Activated B cell treated with CpG ODN at 0.5 μM for 24 hours (primary cell): ENCODE measurements at regions of chr1 and their contacts with region 1.

Region 1: DNA sequence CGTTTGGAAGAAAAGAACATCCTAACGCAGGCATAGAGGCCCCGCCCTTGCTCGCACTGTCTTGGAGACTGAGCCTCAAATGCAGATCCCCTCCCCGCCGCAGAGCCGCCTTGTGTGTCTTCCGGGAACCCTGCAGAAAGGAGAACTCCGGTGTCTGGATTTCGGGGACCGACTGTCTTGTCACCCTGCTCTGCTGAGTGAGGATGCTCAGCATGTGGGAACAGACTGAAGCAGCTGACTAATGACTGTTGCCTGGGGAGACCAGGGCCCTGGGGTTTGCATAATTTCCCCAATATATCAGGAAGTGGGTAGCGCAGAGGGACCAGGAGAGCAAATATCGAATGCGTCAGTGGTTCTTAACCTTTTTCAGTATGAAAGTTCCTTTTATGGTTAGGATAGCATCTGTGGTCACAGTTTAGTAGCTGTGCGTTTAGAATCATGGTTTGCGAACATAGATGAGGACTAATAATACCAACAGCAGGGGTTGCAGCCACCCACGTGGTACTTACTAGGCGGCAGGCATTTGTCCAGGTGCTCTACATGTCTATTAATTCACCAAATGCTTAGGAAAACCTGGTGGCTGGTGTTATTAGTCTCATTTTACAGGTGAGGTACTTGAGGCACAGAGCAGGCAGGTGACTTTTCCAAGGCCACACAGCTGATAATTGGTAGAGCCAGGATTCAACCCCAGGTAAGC is 14.3 kb downstream of the GPR137B start:
- DNase-seq: peak; percentile 44
- ATAC-seq: peak; percentile 85
- H3K4me3 Mint-ChIP-seq: peak overlapping the region; percentile 52
- H3K27ac Mint-ChIP-seq: peak overlapping the region; percentile 83
- H3K4me1 Mint-ChIP-seq: peaks cover 57% of the 10 kb centered on the region
- H3K27me3 Mint-ChIP-seq: peaks cover 2% of the 10 kb centered on the region
- CTCF ChIP-seq: no peak

Region 2: DNA sequence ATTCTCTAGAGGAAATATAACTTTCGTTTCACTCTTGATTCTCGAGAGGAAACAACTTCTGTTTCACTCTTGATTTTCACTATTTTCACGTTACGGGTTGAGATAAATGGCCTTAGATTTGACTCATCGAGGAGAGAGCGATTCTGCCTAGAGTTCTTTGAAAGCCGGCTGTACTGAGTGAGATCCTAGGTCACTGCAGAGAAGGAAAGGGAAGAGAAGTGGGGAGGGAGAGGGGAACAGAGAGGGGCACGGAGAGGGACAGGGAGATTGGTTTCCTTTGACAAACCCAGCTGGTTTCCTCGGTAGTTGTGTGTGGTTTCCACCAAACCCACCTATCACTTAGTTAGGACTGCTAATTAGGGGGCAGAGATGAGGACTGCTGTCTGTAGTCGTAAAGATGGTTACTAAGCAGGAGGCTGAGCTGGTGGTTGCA is 35.9 kb before region 1 on chr1:
- CTCF ChIA-PET with region 1: no interaction called
- POLR2A ChIA-PET with region 1: no interaction called
- intact Hi-C with region 1: loop called (anchors 1 kb)
- DNase-seq: no peak
- ATAC-seq: peak; percentile 52
- H3K4me3 Mint-ChIP-seq: peak overlapping the region; percentile 82
- H3K27ac Mint-ChIP-seq: peak overlapping the region; percentile 77
- H3K4me1 Mint-ChIP-seq: peaks cover 27% of the 10 kb centered on the region
- H3K27me3 Mint-ChIP-seq: no peaks in the 10 kb centered on the region
- CTCF ChIP-seq: no peak

Region 3: DNA sequence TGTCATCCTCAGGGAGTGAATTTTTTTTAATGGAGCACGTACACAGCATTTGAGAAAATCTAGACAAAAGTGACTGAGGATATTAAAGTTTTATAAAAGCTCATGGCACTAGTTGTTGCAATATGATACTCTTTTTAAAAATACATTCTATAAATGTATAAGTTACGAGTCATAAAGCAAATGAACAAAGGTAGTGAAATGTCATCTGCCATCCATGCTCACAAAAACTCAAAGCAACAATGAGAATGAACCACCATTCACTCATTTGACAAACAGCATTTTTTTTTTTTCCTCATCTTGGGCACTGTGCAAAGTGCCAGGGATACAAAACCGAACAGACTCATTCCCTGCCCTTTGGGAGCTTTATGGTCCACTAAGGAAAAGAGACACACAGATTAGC is 24.4 kb after region 1 on chr1:
- CTCF ChIA-PET with region 1: no interaction called
- POLR2A ChIA-PET with region 1: no interaction called
- intact Hi-C with region 1: no loop called
- DNase-seq: no peak
- ATAC-seq: no peak
- H3K4me3 Mint-ChIP-seq: no peak overlapping the region
- H3K27ac Mint-ChIP-seq: no peak overlapping the region
- H3K4me1 Mint-ChIP-seq: peaks cover 2% of the 10 kb centered on the region
- H3K27me3 Mint-ChIP-seq: no peaks in the 10 kb centered on the region
- CTCF ChIP-seq: no peak

Region 4: DNA sequence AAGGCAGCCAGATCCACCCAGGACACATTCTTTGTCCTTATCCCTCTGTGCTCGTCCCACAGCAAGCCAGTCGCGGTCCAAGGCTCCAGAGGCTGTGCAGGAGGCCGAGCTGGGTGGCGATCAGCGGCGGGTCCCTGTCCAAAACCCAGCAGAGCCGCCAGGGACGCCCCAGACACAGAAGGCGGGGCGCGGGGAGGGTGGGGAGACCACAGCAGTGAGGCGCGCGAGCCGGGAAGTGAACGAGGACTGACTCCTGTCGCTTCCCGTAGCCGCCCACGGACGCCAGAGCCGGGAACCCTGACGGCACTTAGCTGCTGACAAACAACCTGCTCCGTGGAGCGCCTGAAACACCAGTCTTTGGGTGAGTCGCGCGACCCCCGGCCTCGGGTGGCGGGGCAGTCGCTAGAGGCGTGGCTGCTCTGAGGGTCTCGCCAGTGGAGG is 367.1 kb after region 1 on chr1 and contains the start of gene LGALS8:
- CTCF ChIA-PET with region 1: no interaction called
- POLR2A ChIA-PET with region 1: no interaction called
- intact Hi-C with region 1: loop called (anchors 2 kb)
- DNase-seq: peak; percentile 69
- ATAC-seq: peak; percentile 60
- H3K4me3 Mint-ChIP-seq: peak within 1 kb of the TSS; percentile 95
- H3K27ac Mint-ChIP-seq: peak within 1 kb of the TSS; percentile 90
- H3K4me1 Mint-ChIP-seq: peaks cover 12% of the 10 kb centered on the region
- H3K27me3 Mint-ChIP-seq: no peaks in the 10 kb centered on the region
- CTCF ChIP-seq: no peak
- total RNA-seq, gene LGALS8: 36.0 and 37.4 TPM in 2 replicates